Right ventricle myocardium inferior (tissue), 1 donor: ENCODE measurements at regions of chr11 and their contacts with region 1.

Region 1: DNA sequence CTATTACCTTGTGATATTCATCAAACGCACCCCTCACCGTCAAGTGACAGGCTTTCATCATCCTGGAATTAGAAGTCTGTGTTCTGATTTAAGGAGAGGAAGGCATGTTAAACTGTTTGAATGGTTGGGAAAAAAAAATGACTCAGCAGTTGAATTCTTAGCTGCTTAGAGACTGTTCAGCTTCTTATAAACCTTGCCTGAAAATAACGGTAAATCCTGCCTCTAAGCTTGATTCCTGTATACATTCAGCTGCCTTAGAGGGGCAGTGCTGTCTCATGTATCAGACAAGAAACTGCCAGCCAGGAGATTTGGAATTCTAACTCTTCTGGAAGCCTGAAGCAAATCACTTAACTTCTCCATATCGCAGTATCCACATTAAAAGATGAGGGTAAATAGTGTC is 437.4 kb downstream of the JRKL start:
- DNase-seq: no peak
- ATAC-seq: peak; percentile 28

Region 2: GRCh38 chr11:96543177-96543576 is 284.0 kb before region 1 on chr11:
- intact Hi-C with region 1: no loop called
- DNase-seq: no peak
- ATAC-seq: no peak

Region 3: DNA sequence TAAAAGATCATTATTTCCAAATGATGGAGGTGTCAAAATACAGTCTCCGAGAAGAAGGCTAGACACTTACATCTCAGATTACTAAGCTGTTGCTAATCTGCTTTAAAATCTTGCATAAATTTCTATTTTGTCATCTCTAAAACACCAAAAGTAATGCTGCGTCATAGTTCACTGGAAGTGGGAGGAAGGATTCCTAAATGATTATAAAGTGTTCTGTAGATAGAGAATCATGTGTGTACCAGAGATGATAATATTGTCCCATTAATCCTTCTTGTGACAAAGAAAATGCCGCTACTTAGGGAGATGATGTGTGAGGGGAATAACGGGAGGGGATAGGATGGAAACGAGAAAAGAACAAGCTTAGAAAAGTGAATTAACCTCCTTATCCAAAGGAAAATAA is 168.7 kb before region 1 on chr11:
- intact Hi-C with region 1: no loop called
- DNase-seq: no peak
- ATAC-seq: no peak

Region 4: DNA sequence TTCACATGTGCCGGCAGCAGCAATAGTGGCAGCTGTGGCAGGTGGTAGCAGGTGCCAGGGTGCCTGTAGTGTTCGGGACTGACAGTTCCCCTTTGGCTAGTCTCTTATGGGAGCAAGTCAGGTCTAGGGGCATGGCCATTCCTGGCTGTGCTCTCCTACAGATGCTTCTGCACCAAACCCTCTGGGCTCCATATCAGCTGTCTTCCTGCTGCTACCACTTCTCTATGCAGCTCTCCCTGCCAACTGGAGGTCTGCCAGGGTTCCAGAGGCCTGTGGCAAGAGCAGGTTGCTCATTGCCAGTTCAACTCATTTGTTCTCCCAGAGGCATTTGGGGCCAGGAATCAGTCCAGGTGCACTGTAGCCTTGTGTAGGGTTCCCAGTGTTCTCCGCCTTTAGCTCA is 36.4 kb after region 1 on chr11:
- intact Hi-C with region 1: loop called (anchors 5 kb)
- DNase-seq: peak; percentile 90
- ATAC-seq: peak; percentile 97

Region 5: DNA sequence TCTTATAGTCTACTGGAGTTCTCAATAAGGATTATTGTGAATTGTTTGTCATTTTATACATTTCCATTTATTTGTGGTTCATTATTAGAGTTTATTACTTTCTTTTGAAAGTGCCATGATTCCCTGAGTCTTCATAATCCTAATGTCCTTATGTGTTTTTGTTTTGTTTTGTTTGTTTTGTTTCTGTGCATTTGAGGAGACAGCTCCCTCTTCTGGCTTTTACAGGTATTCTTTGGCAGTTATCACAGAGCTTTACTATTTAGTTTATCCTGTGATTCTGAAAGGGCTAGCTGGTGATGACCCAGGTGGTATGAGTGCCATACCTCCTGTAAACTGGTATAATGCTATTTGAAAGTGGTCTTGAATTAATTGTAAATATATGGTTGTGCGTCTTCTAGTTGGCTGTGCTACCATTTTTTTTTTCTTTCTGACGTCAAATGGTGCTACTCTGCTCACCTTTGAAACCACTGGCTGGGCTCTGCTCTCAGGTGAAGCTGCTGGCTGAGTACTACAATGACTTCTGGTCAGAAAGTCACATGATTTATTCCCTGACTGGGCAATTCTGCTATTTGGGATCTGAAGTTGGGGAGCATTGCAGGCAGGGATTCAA is 313.8 kb after region 1 on chr11:
- intact Hi-C with region 1: loop called (anchors 2 kb)
- DNase-seq: no peak
- ATAC-seq: no peak